Activated CD8-positive, alpha-beta T cell treated with anti-CD3 and anti-CD28 coated beads for 36 hours (primary cell): ENCODE measurements at regions of chr11 and their contacts with region 1.

Region 1: GRCh38 chr11:111982019-111982464 is 43.2 kb upstream of the DLAT start:
- DNase-seq: peak; percentile 81
- ATAC-seq: peak; percentile 85
- H3K4me3 Mint-ChIP-seq: no peak overlapping the region
- H3K27ac Mint-ChIP-seq: no peak overlapping the region
- H3K4me1 Mint-ChIP-seq: peaks cover 4% of the 10 kb centered on the region
- H3K27me3 Mint-ChIP-seq: peaks cover 25% of the 10 kb centered on the region
- CTCF ChIP-seq: peak; percentile 66

Region 2: DNA sequence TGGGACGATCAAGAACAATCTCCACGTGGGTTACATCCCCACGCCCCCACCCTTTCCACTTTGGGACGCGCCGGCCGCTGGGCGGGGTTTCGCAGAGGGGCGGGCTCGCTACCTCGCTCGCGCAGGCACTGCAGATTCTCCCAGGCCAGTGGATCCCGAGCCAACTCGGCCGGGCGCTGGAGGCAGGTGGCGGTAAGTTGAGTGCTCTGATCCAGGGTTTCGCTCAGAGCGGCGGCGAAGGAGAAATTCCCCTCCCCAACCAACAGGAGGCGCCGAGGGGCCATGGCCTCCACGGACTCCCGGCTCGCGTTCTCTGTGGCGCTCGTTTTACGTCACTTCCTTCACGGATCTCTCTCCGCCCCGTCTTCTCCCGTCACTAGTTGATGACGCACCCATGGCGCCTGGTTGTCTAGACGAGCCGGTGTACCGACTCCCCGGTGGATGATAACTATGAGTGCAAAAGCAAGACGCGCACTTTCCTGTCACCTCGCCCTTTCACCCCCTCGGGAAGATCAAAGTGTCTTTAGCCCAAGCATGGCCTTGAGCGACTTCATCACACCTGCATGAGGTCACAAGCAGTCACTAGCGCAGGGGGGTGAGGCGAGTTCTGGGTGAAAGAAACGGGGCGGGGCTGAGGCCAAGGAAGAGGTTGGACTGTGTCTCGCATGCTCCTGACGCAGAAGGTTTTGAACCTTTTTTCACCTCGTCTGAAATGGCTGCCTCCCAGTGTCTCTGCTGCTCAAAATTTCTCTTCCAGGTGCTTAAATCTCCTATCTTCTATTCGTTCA is 103.0 kb before region 1 on chr11 and contains the starts of genes CFAP68 and FDXACB1:
- CTCF ChIA-PET with region 1: interaction called, 8 read pairs
- POLR2A ChIA-PET with region 1: interaction called, 3 read pairs
- intact Hi-C with region 1: loop called (anchors 5 kb)
- DNase-seq: peak; percentile 97
- ATAC-seq: peak; percentile 94
- H3K4me3 Mint-ChIP-seq: peak within 1 kb of the TSS; percentile 88
- H3K27ac Mint-ChIP-seq: peak within 1 kb of the TSS; percentile 99
- H3K4me1 Mint-ChIP-seq: peaks cover 24% of the 10 kb centered on the region
- H3K27me3 Mint-ChIP-seq: no peaks in the 10 kb centered on the region
- CTCF ChIP-seq: peak; percentile 92
- total RNA-seq, gene CFAP68: 38.6 to 39.1 TPM
- total RNA-seq, gene FDXACB1: 6.9 to 7.1 TPM

Region 3: DNA sequence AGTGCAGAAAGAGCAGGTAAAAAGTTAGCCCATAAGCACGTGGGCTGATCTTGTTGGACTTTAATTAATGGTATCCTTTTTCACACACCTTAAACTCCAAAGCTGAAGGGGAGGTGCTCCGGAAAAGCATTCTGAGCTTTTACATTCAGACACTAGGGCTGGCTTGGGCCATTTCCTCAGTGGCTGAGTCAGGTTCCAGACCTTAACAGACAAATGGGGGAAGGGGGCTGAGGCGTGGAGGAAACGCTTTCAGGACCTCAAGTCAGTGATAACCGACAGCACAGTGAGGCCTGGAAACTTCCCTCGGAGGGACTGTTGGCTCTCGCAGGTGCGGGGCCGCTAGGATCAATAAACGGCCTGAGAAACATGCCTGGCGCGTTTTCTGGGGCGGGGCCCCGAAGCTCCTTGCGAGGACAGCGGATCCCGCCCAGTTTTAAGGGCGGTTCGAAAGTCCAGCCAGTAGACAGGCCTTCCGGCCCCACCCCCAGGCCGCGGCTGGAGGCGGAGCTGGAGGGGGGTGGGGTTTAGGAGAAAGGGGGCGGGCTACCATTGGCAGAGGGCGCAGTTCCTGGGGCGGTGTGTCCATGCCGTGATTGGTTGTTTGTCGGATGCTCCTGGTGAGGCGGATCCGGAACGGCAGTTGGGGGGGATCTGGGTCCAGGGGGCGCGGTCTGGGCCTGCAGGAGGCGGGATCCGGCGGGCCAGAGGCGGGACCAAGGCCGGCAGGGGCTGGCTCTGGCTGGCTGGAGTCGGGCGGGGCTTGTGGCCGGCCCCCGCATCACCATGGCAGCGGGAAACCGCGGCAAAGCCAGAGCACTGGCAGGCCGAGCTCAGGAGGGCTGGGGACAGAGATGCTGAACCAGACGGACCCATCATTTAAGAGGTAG is 55.3 kb before region 1 on chr11:
- CTCF ChIA-PET with region 1: interaction called, 223 read pairs
- POLR2A ChIA-PET with region 1: interaction called, 3 read pairs
- intact Hi-C with region 1: no loop called
- DNase-seq: peak; percentile 96
- ATAC-seq: peak; percentile 93
- H3K4me3 Mint-ChIP-seq: peak overlapping the region; percentile 75
- H3K27ac Mint-ChIP-seq: peak overlapping the region; percentile 93
- H3K4me1 Mint-ChIP-seq: peaks cover 21% of the 10 kb centered on the region
- H3K27me3 Mint-ChIP-seq: no peaks in the 10 kb centered on the region
- CTCF ChIP-seq: no peak

Region 4: GRCh38 chr11:111938687-111939160 is 43.3 kb before region 1 on chr11:
- CTCF ChIA-PET with region 1: interaction called, 223 read pairs
- POLR2A ChIA-PET with region 1: interaction called, 5 read pairs
- intact Hi-C with region 1: loop called (anchors 5 kb)
- DNase-seq: peak; percentile 51
- ATAC-seq: peak; percentile 59
- H3K4me3 Mint-ChIP-seq: peak overlapping the region; percentile 75
- H3K27ac Mint-ChIP-seq: peak overlapping the region; percentile 82
- H3K4me1 Mint-ChIP-seq: peaks cover 54% of the 10 kb centered on the region
- H3K27me3 Mint-ChIP-seq: no peaks in the 10 kb centered on the region
- CTCF ChIP-seq: no peak

Region 5: DNA sequence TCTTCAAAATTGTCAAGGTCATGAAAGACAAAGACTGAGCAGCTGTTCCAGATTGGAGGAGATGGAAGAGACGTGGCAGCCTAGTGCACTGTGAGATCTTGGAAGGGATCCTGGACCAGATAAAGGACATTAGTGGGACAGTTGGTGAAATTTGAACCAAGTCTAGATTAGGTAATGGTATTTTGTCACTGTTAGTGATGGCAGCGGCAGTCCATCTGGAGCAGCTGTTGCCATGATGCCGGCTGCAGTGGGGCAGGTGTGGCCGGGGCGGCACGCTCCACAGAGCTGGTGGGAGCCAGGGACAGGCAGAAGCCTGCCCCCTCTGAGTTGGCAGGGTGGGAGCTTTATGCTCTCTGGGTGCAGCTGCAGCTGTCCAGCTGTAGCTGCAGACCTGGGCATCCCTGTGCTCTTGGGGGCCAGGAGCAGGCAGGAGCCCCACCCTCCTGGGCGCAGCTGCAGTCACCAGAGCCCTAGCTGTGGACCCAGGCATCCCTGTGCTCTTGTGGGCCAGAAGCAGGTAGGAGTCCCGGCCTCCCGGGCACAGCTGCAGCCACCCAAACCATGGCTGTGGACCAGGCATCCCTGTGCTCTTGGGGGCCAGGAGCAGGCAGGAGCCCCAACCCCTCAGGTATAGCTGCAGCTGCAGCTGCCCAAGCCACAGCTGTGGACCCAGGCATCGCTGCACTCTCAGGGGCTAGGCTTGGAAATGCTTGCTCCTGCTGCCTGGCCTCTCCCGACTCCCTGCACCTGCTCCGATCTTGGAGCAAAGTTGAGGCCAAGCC is 24.2 kb before region 1 on chr11:
- CTCF ChIA-PET with region 1: interaction called, 13 read pairs
- POLR2A ChIA-PET with region 1: no interaction called
- intact Hi-C with region 1: no loop called
- DNase-seq: no peak
- ATAC-seq: no peak
- H3K4me3 Mint-ChIP-seq: no peak overlapping the region
- H3K27ac Mint-ChIP-seq: no peak overlapping the region
- H3K4me1 Mint-ChIP-seq: no peaks in the 10 kb centered on the region
- H3K27me3 Mint-ChIP-seq: no peaks in the 10 kb centered on the region
- CTCF ChIP-seq: no peak

Region 6: GRCh38 chr11:111992206-111992855 is 10.3 kb after region 1 on chr11:
- CTCF ChIA-PET with region 1: interaction called, 20 read pairs
- POLR2A ChIA-PET with region 1: interaction called, 3 read pairs
- intact Hi-C with region 1: no loop called
- DNase-seq: no peak
- ATAC-seq: no peak
- H3K4me3 Mint-ChIP-seq: no peak overlapping the region
- H3K27ac Mint-ChIP-seq: no peak overlapping the region
- H3K4me1 Mint-ChIP-seq: no peaks in the 10 kb centered on the region
- H3K27me3 Mint-ChIP-seq: no peaks in the 10 kb centered on the region
- CTCF ChIP-seq: no peak

Region 7: GRCh38 chr11:112302231-112302732 is 320.2 kb after region 1 on chr11:
- CTCF ChIA-PET with region 1: no interaction called
- POLR2A ChIA-PET with region 1: no interaction called
- intact Hi-C with region 1: no loop called
- DNase-seq: no peak
- ATAC-seq: no peak
- H3K4me3 Mint-ChIP-seq: no peak overlapping the region
- H3K27ac Mint-ChIP-seq: peak overlapping the region; percentile 24
- H3K4me1 Mint-ChIP-seq: peaks cover 15% of the 10 kb centered on the region
- H3K27me3 Mint-ChIP-seq: no peaks in the 10 kb centered on the region
- CTCF ChIP-seq: no peak